SK-N-SH (cell line): ENCODE measurements at regions of chr13 and their contacts with region 1.

Region 1: DNA sequence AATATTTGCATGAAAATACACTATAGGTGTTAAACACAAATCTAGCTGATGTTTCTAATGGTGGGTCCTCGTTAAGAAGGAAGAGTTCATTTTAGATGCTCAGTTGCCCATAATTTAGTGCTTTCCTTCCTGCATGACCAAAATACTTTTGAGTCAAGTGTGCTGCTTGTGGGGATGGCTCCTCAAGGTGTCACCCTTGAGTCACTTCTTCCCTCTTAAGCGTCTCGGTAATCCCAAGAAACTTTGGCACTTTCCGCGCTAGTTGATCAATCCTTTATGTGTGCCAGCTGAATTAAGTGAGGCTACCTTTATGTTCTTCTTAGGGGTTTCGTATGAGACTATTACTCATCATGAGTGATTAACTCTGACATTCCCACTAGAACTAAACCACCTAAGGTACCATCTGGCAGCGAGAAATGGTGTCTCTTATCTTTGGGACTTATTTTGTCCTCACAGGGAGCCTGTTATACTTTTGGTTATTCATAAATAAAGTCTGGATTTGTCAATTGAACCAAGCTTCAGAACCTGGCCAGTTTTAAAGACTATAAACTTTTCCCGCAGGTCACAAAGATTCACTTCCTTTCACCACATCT is 106.8 kb downstream of the NHLRC3 start:
- DNase-seq: peak; percentile 56
- H3K4me3 ChIP-seq: no peak overlapping the region; a peak in 1 of 4 replicates
- H3K27ac ChIP-seq: no peak overlapping the region
- H3K4me1 ChIP-seq: no peaks in the 10 kb centered on the region
- H3K27me3 ChIP-seq: no peaks in the 10 kb centered on the region; the same call in 1 of the 2 replicates
- CTCF ChIP-seq: peak; percentile 76
- EP300 ChIP-seq: no peak
- RAD21 ChIP-seq: peak; percentile 79

Region 2: GRCh38 chr13:39132286-39133230 is 12.5 kb before region 1 on chr13:
- CTCF ChIA-PET with region 1: interaction called, 14 read pairs
- POLR2A ChIA-PET with region 1: no interaction called
- DNase-seq: no peak
- H3K4me3 ChIP-seq: no peak overlapping the region
- H3K27ac ChIP-seq: no peak overlapping the region
- H3K4me1 ChIP-seq: no peaks in the 10 kb centered on the region
- H3K27me3 ChIP-seq: no peaks in the 10 kb centered on the region
- CTCF ChIP-seq: no peak
- EP300 ChIP-seq: no peak
- RAD21 ChIP-seq: no peak

Region 3: GRCh38 chr13:39159393-39159792 is 14.4 kb after region 1 on chr13:
- CTCF ChIA-PET with region 1: interaction called, 14 read pairs
- POLR2A ChIA-PET with region 1: no interaction called
- DNase-seq: no peak
- H3K4me3 ChIP-seq: no peak overlapping the region
- H3K27ac ChIP-seq: no peak overlapping the region
- H3K4me1 ChIP-seq: no peaks in the 10 kb centered on the region; a peak in 1 of 4 replicates
- H3K27me3 ChIP-seq: no peaks in the 10 kb centered on the region; the same call in 1 of the 2 replicates
- CTCF ChIP-seq: no peak
- EP300 ChIP-seq: no peak
- RAD21 ChIP-seq: no peak

Region 4: DNA sequence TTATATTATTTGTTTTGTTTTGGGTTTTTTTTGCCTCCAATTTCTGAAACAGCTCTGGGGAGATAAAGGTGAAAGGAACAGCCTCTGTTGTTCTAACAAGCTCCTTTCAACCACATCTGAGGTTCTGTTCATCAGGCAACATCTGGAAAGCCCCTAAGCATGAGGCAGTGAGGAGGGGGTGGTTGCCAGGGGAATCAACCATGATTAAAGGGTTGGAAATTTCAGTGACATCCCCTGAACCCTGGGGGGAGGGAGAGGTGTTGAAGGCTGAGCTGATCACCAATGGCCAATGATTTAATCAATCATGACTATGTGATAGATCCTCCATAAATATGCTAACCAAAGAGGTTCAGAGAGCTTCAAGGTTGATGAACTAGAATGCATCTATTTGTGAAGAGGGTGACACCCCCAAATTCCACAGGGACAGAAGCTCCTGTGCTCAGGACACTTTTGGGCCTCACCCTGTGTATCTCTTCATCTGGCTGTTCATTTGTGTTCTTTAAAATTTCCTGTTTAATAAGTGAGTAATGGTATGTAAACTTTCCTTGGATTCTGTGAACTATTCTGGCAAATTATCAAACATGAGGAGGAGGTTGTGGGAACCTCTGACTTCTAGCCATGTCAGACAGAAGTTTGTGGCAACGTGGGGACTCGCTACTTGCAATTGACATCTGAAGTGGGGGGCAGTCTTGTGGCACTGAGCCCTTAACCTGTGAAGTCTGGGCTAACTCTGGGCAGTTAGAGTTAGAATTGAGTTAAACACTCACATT is 114.5 kb after region 1 on chr13:
- CTCF ChIA-PET with region 1: interaction called, 15 read pairs
- POLR2A ChIA-PET with region 1: no interaction called
- DNase-seq: no peak
- H3K4me3 ChIP-seq: no peak overlapping the region
- H3K27ac ChIP-seq: no peak overlapping the region
- H3K4me1 ChIP-seq: no peaks in the 10 kb centered on the region
- H3K27me3 ChIP-seq: no peaks in the 10 kb centered on the region
- CTCF ChIP-seq: no peak
- EP300 ChIP-seq: no peak
- RAD21 ChIP-seq: no peak